Activated CD8-positive, alpha-beta T cell treated with anti-CD3 and anti-CD28 coated beads, Interleukin-2, amount 10 ng/mL, durations not matched to agents 7 days and 5 days (primary cell): ENCODE measurements at regions of chr17 and their contacts with region 1.

Region 1: DNA sequence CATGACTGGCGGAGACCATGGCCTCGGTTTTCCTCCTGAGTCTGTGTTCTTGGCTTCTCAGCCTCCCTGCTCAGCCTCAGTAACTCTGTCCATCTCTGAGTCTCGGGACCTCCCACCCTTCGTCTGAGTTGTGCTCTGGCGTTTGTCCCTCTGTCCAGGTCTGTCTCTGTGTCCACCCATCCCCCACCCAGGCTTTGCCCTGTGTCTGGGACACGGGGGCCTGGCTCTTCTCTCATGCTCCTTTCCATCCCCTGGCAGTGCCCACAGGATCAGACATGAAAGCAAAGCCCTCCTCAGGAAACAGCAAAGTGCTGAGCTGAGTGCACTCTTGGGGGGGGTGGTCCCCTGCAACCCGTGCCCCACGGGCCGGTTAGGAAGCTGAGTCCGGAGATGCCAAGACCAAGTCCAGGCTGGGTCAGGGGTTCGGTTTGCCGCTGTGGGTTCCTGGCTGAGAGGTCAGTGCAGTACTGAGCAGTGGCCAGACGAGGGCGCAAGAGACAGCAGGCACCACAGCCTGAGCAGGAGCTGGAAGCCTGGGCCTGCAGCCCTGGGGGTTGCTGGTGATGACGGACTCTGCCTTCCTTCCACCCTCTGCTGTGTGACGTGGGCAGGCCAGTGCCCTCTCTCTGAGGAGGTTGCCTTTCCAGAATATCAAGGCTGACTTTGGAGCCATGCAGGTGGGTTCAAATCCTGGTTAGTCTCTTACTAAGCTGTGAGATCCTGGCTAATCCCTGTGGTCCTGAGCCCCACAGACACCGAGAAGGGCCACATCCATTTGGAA is 2.5 kb downstream of the P2RX1 start:
- DNase-seq: peak; percentile 88
- ATAC-seq: peak; percentile 59
- H3K4me3 Mint-ChIP-seq: no peak overlapping the region
- H3K27ac Mint-ChIP-seq: peak overlapping the region; percentile 78
- H3K4me1 Mint-ChIP-seq: peaks cover 70% of the 10 kb centered on the region
- H3K27me3 Mint-ChIP-seq: no peaks in the 10 kb centered on the region

Region 2: GRCh38 chr17:3845621-3846441 is 67.9 kb before region 1 on chr17 and contains the start of gene NCBP3:
- CTCF ChIA-PET with region 1: interaction called, 18 read pairs
- POLR2A ChIA-PET with region 1: no interaction called
- DNase-seq: peak; percentile 90
- ATAC-seq: peak; percentile 97
- H3K4me3 Mint-ChIP-seq: peak within 1 kb of the TSS; percentile 94
- H3K27ac Mint-ChIP-seq: peak within 1 kb of the TSS; percentile 93
- H3K4me1 Mint-ChIP-seq: peaks cover 30% of the 10 kb centered on the region
- H3K27me3 Mint-ChIP-seq: peaks cover 5% of the 10 kb centered on the region
- total RNA-seq, gene NCBP3: 39.1 to 42.6 TPM

Region 3: GRCh38 chr17:3893003-3893719 is 20.6 kb before region 1 on chr17 and contains the start of gene CAMKK1:
- CTCF ChIA-PET with region 1: interaction called, 28 read pairs
- POLR2A ChIA-PET with region 1: no interaction called
- DNase-seq: peak; percentile 91
- ATAC-seq: peak; percentile 88
- H3K4me3 Mint-ChIP-seq: peak within 1 kb of the TSS; percentile 79
- H3K27ac Mint-ChIP-seq: peak within 1 kb of the TSS; percentile 86
- H3K4me1 Mint-ChIP-seq: peaks cover 26% of the 10 kb centered on the region
- H3K27me3 Mint-ChIP-seq: peaks cover 2% of the 10 kb centered on the region
- total RNA-seq, gene CAMKK1: 3.3 to 4.0 TPM

Region 4: DNA sequence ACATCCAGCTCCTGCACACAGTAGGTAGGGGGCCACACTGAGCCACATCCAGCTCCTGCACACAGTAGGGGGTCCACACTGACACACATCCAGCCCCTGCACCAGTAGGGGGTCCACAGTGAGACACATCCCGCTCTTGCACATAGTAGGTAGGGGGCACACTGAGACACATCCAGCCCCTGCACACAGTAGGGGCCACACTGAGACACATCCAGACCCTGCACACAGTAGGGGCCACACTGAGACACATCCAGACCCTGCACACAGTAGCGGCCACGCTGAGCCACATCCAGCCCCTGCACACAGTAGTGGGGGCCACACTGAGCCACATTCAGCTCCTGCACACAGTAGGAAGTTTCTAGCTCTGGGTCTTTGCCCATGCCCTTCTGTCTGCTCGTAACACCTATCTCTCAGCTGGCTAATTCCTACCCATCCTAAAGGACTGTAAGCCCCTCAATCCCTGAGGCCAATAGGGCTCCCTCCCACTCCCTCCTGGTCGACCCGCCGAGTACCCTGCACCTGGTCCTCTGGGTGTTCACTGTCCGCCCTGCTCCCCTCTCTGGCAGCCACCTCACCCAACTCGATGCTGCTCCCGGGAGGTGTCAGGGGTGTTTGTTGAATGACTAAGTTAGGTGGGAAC is 59.9 kb after region 1 on chr17:
- CTCF ChIA-PET with region 1: no interaction called
- POLR2A ChIA-PET with region 1: no interaction called
- DNase-seq: no peak
- ATAC-seq: no peak
- H3K4me3 Mint-ChIP-seq: no peak overlapping the region
- H3K27ac Mint-ChIP-seq: no peak overlapping the region
- H3K4me1 Mint-ChIP-seq: peaks cover 26% of the 10 kb centered on the region
- H3K27me3 Mint-ChIP-seq: peaks cover 6% of the 10 kb centered on the region

Region 5: GRCh38 chr17:4004517-4005295 is 91.0 kb after region 1 on chr17:
- CTCF ChIA-PET with region 1: interaction called, 69 read pairs
- POLR2A ChIA-PET with region 1: interaction called, 3 read pairs
- DNase-seq: peak; percentile 64
- ATAC-seq: peak; percentile 77
- H3K4me3 Mint-ChIP-seq: no peak overlapping the region
- H3K27ac Mint-ChIP-seq: no peak overlapping the region
- H3K4me1 Mint-ChIP-seq: peaks cover 3% of the 10 kb centered on the region
- H3K27me3 Mint-ChIP-seq: peaks cover 2% of the 10 kb centered on the region

Region 6: GRCh38 chr17:4074831-4075495 is 161.2 kb after region 1 on chr17:
- CTCF ChIA-PET with region 1: interaction called, 23 read pairs
- POLR2A ChIA-PET with region 1: no interaction called
- DNase-seq: peak; percentile 40
- ATAC-seq: peak; percentile 47
- H3K4me3 Mint-ChIP-seq: no peak overlapping the region
- H3K27ac Mint-ChIP-seq: no peak overlapping the region
- H3K4me1 Mint-ChIP-seq: peaks cover 4% of the 10 kb centered on the region
- H3K27me3 Mint-ChIP-seq: no peaks in the 10 kb centered on the region

Region 7: GRCh38 chr17:4182043-4182442 is 268.3 kb after region 1 on chr17:
- CTCF ChIA-PET with region 1: no interaction called
- POLR2A ChIA-PET with region 1: no interaction called
- DNase-seq: no peak
- ATAC-seq: no peak
- H3K4me3 Mint-ChIP-seq: no peak overlapping the region
- H3K27ac Mint-ChIP-seq: no peak overlapping the region
- H3K4me1 Mint-ChIP-seq: peaks cover 14% of the 10 kb centered on the region
- H3K27me3 Mint-ChIP-seq: no peaks in the 10 kb centered on the region